ENCODE measurements at regions of chr3 and their contacts with region 1.

Region 1: DNA sequence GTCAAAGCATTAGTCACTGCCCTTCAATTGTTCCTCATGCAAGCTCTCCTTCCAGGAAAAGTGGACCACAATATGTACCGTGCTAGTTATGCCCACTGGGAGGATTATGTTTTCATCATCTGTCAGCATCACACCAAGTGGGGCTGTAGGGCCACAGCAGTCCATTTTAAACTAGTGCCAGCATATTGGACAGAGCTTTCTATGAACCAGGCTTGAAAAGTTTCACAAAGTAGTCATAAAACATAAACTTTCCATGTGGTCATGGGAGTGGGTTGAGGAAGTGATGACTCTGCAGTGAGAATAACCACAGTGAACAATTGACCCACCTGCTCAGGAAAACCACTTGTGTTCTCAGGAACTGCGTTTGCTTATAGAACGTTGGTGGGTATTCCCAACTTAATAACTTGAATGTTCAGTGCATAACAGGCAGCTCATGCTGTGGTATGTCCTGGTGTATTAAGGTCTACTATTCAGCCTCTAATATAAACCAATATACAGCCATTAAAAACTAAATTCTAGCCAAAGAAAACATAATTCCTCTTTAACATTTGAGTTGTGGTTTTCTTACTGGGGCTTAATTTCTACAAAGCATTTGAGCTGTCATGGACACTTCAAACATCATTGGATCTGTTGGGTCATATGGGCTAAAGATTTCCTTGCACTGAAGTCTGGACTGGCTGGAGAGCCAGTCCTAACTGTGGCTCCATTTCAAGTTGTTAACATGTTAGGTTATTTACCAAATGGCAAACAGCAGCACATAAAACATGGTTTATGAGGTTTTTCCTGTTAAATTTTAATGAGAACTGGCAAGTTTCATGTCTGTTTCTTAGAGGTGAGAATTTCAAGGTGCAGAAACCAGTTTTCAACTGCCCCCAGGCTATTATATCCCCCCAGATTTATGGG is 274.1 kb downstream of the OTOL1 start:
- DNase-seq: peak; percentile 9
- H3K4me3 Mint-ChIP-seq: no peak overlapping the region
- H3K27ac Mint-ChIP-seq: peak overlapping the region; percentile 68
- H3K4me1 Mint-ChIP-seq: peaks cover 37% of the 10 kb centered on the region
- H3K27me3 Mint-ChIP-seq: no peaks in the 10 kb centered on the region

Region 2: DNA sequence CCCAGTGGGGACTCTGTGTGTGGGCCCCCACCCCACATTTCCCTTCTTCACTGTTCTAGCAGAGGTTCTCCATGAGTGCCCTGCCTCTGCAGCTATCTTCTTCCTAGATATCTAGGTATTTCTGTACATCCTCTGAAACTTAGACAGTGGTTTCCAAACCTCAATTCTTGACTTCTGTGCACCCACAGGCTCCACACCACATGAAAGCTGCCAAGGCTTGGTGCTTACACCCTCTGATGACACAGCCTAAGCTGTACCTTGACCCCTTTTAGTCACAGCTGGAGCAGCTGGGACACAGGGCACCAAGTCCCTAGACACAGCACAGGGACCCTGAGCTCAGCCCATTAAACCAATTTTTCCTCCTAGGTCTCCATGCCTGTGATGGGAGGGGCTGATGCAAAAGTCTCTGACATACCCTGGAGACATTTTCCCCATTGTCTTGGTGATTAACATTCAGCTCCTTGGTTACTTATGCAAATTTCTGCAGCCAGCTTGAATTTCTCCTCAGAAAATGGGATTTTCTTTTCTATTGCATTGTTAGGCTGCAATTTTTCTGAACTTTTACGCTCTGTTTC is 30.3 kb after region 1 on chr3:
- intact Hi-C with region 1: loop called (anchors 1 kb)
- DNase-seq: no peak
- H3K4me3 Mint-ChIP-seq: no peak overlapping the region
- H3K27ac Mint-ChIP-seq: no peak overlapping the region
- H3K4me1 Mint-ChIP-seq: peaks cover 9% of the 10 kb centered on the region
- H3K27me3 Mint-ChIP-seq: peaks cover 4% of the 10 kb centered on the region

Measured in activated T-helper 2 cell treated with anti-CD3 and anti-CD28 coated beads, Interferon-gamma antibody, Interleukin-2, Interleukin-4, amounts not matched to agents 10 μg/mL and 5 μg/mL and 100 μg/mL, durations not matched to agents 14 hours and 24 hours and 36 hours (primary cell).